CD8-positive, alpha-beta T cell (primary cell): ENCODE measurements at regions of chr17 and their contacts with region 1.

Region 1: DNA sequence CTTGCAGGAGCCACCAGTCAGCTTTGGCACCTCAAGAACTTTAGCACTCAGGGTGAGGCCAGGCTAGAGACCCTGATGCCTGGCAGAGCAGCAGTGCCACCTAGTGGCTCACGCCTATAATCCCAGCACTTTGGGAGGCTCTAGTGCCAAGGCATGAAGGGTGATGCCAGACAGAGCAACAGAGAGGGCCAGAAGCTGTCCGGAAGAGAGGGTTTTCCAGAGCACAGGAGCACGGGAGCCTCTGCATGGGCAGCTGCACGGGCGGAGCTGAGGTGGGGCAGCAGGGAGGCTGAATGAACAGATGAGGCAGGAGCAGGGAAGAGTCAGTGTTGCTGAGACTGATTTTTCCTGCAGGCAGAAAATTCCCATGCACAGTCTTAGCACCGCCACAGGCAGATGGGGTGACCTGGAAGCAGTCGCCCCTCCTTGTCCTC is 38.9 kb downstream of the MYH3 start:
- DNase-seq: peak; percentile 21 to 72 (median 50)
- ATAC-seq: peak; percentile 79
- H3K4me3 ChIP-seq: no peak overlapping the region
- H3K4me3 Mint-ChIP-seq: no peak overlapping the region
- H3K27ac ChIP-seq: no peak overlapping the region
- H3K27ac Mint-ChIP-seq: no peak overlapping the region
- H3K4me1 ChIP-seq: no peaks in the 10 kb centered on the region
- H3K4me1 Mint-ChIP-seq: no peaks in the 10 kb centered on the region
- H3K27me3 ChIP-seq: no peaks in the 10 kb centered on the region
- H3K27me3 Mint-ChIP-seq: peaks cover 5% of the 10 kb centered on the region
- CTCF ChIP-seq: peak; percentile 73

Region 2: DNA sequence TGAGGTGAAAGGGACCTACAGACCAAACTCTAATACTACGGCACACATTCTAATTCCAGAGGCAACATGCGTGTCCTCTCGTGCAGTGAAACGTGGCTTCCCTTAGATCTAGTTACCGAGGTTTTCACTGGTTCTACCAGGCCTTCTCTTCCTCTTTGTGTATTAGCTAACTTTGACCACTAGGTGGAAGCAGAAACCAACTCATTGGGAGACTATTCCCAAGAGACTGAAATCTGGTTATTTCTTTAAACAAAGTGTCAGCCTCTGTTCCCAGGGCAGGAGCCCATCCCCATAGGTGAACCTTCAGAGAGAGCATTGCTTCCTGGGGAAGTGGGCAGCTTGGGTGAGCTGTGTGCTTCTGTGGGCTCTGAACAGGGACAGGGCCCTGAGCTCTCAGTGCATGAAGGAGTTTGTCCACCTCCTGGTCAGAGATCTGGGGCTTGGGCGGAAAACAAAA is 693.5 kb before region 1 on chr17:
- CTCF ChIA-PET with region 1: interaction called, 55 read pairs
- POLR2A ChIA-PET with region 1: no interaction called
- intact Hi-C with region 1: loop called in 1 of 2 experiments (anchors 1 kb)
- DNase-seq: peak in 3 of 9 experiments; percentile 11 to 67 (median 58)
- ATAC-seq: no peak
- H3K4me3 ChIP-seq: no peak overlapping the region
- H3K4me3 Mint-ChIP-seq: no peak overlapping the region
- H3K27ac ChIP-seq: no peak overlapping the region
- H3K27ac Mint-ChIP-seq: no peak overlapping the region
- H3K4me1 ChIP-seq: no peaks in the 10 kb centered on the region
- H3K4me1 Mint-ChIP-seq: peaks cover 2% of the 10 kb centered on the region
- H3K27me3 ChIP-seq: no peaks in the 10 kb centered on the region
- H3K27me3 Mint-ChIP-seq: no peaks in the 10 kb centered on the region
- CTCF ChIP-seq: peak; percentile 63

Region 3: GRCh38 chr17:9968902-9969617 is 649.2 kb before region 1 on chr17:
- CTCF ChIA-PET with region 1: interaction called, 3 read pairs
- POLR2A ChIA-PET with region 1: no interaction called
- intact Hi-C with region 1: loop called (anchors 1 to 5 kb)
- DNase-seq: no peak
- ATAC-seq: no peak
- H3K4me3 ChIP-seq: no peak overlapping the region
- H3K4me3 Mint-ChIP-seq: no peak overlapping the region
- H3K27ac ChIP-seq: no peak overlapping the region
- H3K27ac Mint-ChIP-seq: no peak overlapping the region
- H3K4me1 ChIP-seq: no peaks in the 10 kb centered on the region
- H3K4me1 Mint-ChIP-seq: no peaks in the 10 kb centered on the region
- H3K27me3 ChIP-seq: no peaks in the 10 kb centered on the region
- H3K27me3 Mint-ChIP-seq: no peaks in the 10 kb centered on the region
- CTCF ChIP-seq: no peak

Region 4: DNA sequence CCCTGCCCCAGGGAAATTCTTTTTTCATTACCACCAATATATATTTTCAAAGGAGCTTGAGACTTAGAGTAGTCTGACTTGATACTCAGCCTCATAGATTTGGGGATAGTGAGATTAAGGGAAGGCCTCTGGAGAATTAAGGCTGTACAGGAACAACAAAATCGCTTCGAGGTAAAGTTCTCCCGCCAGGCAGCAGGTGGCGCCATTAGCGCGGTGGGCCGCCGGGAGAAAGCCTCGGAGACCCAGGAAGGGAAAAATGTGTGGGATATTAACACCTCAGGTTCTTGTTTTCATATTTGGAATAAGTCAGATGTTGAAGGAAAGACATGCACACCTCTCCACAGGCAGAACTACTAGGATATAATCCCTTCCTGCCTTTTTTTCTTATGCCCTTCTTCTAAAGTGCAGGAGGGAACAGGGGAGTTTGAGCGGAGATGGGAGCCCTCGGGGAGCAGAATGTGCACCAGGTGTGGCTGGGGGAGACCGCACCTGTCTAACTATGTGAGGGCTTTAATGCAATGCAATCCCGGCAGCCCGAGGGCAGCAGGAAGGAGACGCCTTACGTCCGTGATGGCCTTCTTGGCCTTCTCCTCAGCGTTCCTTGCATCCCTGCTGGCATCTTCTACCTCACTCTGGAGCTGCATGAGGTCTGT is 13.0 kb after region 1 on chr17:
- CTCF ChIA-PET with region 1: interaction called, 121 read pairs
- POLR2A ChIA-PET with region 1: no interaction called
- intact Hi-C with region 1: no loop called
- DNase-seq: peak in 4 of 9 experiments; percentile 16 to 31 (median 26)
- ATAC-seq: no peak
- H3K4me3 ChIP-seq: no peak overlapping the region
- H3K4me3 Mint-ChIP-seq: no peak overlapping the region
- H3K27ac ChIP-seq: no peak overlapping the region
- H3K27ac Mint-ChIP-seq: no peak overlapping the region
- H3K4me1 ChIP-seq: no peaks in the 10 kb centered on the region
- H3K4me1 Mint-ChIP-seq: no peaks in the 10 kb centered on the region
- H3K27me3 ChIP-seq: no peaks in the 10 kb centered on the region
- H3K27me3 Mint-ChIP-seq: no peaks in the 10 kb centered on the region
- CTCF ChIP-seq: peak; percentile 80